SK-N-SH (cell line): ENCODE measurements at regions of chr2 and their contacts with region 1.

Region 1: DNA sequence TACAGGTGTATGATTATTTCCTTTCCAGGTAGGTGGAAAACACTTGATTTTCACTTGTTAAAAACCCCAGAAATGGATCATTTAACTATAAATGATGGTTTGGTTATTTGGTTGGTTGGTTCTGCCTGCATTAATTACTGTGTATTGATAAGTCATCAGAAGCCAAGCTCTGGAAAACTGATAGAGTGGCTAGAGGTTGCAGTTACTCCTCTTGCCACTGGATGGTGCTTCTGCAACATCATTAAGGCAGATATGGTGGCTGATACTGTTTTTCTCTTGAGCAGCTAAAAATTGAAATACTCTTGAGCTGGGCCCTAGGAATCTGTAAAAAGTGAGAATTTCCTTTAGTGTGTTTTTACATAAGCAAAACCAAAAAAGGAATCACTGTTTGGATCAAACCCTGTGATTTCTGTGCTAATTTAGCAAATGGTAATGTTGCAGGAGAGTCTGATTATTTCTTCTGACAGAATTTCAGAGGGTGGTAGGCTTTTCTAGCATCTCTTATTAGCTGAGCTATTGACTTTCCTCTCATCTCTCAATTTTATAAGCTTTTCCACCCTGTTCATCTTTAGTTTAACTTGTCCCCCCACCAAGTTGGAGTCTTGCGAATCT is 54.3 kb downstream of the RAB10 start:
- DNase-seq: peak; percentile 66
- H3K4me3 ChIP-seq: no peak overlapping the region; a peak in 1 of 4 replicates
- H3K27ac ChIP-seq: no peak overlapping the region
- H3K4me1 ChIP-seq: peaks cover 0 to 8% of the 10 kb centered on the region in 2 experiments; a peak in 2 of 4 replicates
- H3K27me3 ChIP-seq: no peaks in the 10 kb centered on the region
- CTCF ChIP-seq: peak; percentile 80
- EP300 ChIP-seq: no peak
- RAD21 ChIP-seq: peak; percentile 89

Region 2: DNA sequence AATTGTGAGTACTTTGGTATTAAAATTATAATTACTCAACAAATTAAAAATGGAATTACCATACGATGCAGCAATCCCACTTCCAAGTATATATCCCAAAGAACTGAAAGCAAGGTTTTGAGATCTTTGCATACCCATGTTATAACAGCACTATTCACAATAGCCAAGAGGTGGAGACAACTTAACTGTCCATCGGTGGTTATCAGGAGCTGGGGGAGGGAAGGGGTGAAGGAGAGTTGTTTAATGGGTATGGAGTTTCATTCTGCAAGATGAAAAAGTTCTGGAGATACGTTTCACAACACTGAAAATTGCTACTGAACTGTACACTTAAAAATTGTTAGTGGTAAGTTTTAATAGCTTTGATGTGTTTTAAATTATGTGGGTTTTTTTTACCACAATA is 28.6 kb before region 1 on chr2:
- CTCF ChIA-PET with region 1: interaction called, 20 read pairs
- POLR2A ChIA-PET with region 1: no interaction called
- DNase-seq: no peak
- H3K4me3 ChIP-seq: no peak overlapping the region
- H3K27ac ChIP-seq: no peak overlapping the region
- H3K4me1 ChIP-seq: no peaks in the 10 kb centered on the region
- H3K27me3 ChIP-seq: no peaks in the 10 kb centered on the region
- CTCF ChIP-seq: peak; percentile 17; the same call in 1 of the 2 replicates
- EP300 ChIP-seq: no peak
- RAD21 ChIP-seq: no peak; the same call in 1 of the 2 replicates

Region 3: GRCh38 chr2:26072925-26073768 is 15.0 kb before region 1 on chr2:
- CTCF ChIA-PET with region 1: interaction called, 65 read pairs
- POLR2A ChIA-PET with region 1: interaction called, 3 read pairs
- DNase-seq: no peak
- H3K4me3 ChIP-seq: no peak overlapping the region
- H3K27ac ChIP-seq: no peak overlapping the region; a peak in 1 of 4 replicates
- H3K4me1 ChIP-seq: peaks cover 6 to 14% of the 10 kb centered on the region in 2 experiments; a peak in 3 of 4 replicates
- H3K27me3 ChIP-seq: no peaks in the 10 kb centered on the region
- CTCF ChIP-seq: no peak
- EP300 ChIP-seq: no peak
- RAD21 ChIP-seq: no peak

Region 4: DNA sequence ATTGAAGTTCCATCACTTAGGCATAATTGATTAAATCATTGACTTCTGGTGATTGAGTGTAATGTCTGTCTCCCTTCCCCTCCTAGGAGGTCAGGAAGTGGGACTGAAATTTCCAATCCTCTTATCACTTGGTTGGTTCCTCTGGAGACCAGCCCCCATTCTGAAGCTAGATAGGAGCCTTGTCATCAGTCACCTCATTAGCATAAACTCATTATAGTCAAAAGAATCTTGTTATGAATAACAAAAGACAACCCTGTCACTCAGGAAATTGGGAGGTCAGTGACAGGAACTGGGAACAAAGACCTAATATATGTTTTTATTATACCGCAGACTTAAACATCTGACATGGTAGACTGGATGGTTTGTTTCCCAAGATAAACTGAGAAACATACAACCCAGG is 24.1 kb after region 1 on chr2:
- CTCF ChIA-PET with region 1: interaction called, 11 read pairs
- POLR2A ChIA-PET with region 1: no interaction called
- DNase-seq: no peak
- H3K4me3 ChIP-seq: no peak overlapping the region
- H3K27ac ChIP-seq: no peak overlapping the region
- H3K4me1 ChIP-seq: no peaks in the 10 kb centered on the region; a peak in 1 of 4 replicates
- H3K27me3 ChIP-seq: no peaks in the 10 kb centered on the region
- CTCF ChIP-seq: no peak
- EP300 ChIP-seq: no peak
- RAD21 ChIP-seq: no peak

Region 5: DNA sequence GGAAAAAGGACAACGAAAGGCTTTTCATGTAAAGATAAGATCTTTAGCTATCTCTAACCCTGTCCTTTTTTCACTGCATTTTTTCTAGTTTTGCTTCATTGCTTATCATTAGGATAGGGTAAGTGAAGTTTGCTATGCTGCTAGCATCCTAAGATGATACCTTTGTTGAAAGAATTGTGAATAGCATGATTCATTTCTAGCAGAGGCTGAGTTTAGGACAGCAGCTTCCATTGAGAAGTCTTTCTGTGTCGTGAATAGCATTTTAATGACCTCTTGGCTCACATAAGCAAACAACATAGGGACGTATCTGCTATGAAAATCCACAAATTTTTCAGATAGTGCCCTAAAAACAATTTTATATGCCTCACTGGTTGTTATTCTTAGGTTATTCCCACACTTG is 48.3 kb after region 1 on chr2:
- CTCF ChIA-PET with region 1: interaction called, 74 read pairs
- POLR2A ChIA-PET with region 1: interaction called, 5 read pairs
- DNase-seq: no peak
- H3K4me3 ChIP-seq: no peak overlapping the region
- H3K27ac ChIP-seq: no peak overlapping the region
- H3K4me1 ChIP-seq: peaks cover 0 to 2% of the 10 kb centered on the region in 2 experiments; a peak in 1 of 4 replicates
- H3K27me3 ChIP-seq: no peaks in the 10 kb centered on the region
- CTCF ChIP-seq: no peak
- EP300 ChIP-seq: no peak
- RAD21 ChIP-seq: no peak

Region 6: GRCh38 chr2:26255759-26256384 is 167.7 kb after region 1 on chr2:
- CTCF ChIA-PET with region 1: no interaction called
- POLR2A ChIA-PET with region 1: no interaction called
- DNase-seq: no peak
- H3K4me3 ChIP-seq: no peak overlapping the region
- H3K27ac ChIP-seq: no peak overlapping the region
- H3K4me1 ChIP-seq: no peaks in the 10 kb centered on the region; a peak in 1 of 4 replicates
- H3K27me3 ChIP-seq: no peaks in the 10 kb centered on the region
- CTCF ChIP-seq: no peak
- EP300 ChIP-seq: no peak
- RAD21 ChIP-seq: no peak